Heart left ventricle (tissue), 16 donors: ENCODE measurements at regions of chr3 and their contacts with region 1.

Region 1: GRCh38 chr3:137647179-137647578 is 116.9 kb upstream of the SOX14 start:
- DNase-seq: no peak
- ATAC-seq: no peak
- H3K4me3 ChIP-seq: no peak overlapping the region
- H3K27ac ChIP-seq: no peak overlapping the region
- H3K4me1 ChIP-seq: no peaks in the 10 kb centered on the region
- H3K27me3 ChIP-seq: peaks cover 0 to 31% (median 0%) of the 10 kb centered on the region in 9 donors
- CTCF ChIP-seq: no peak
- POLR2A ChIP-seq: no peak

Region 2: GRCh38 chr3:137612291-137612690 is 34.9 kb before region 1 on chr3:
- intact Hi-C with region 1: loop called in 1 of 10 experiments (anchors 10 kb)
- DNase-seq: no peak
- ATAC-seq: no peak
- H3K4me3 ChIP-seq: no peak overlapping the region
- H3K27ac ChIP-seq: no peak overlapping the region
- H3K4me1 ChIP-seq: no peaks in the 10 kb centered on the region
- H3K27me3 ChIP-seq: no peaks in the 10 kb centered on the region
- CTCF ChIP-seq: no peak
- POLR2A ChIP-seq: no peak

Region 3: DNA sequence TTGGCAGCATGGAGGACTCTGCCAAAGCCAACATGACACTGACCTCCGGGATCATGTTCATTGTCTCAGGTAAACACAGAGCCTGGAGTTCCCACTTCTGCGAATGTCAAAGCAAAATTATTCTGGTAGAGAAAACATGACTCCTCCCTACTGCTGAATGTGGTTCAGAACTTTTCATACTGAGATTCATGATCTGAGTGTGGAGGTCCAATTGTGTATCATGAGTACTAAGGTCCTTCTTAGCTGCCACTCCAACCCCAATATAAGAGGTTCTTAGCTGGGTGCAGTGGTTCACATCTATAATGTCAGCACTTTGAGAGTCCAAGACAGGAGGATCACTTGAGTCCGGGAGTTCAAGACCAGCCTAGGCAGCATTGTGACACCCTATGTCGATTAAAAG is 376.6 kb after region 1 on chr3:
- intact Hi-C with region 1: no loop called
- DNase-seq: no peak
- ATAC-seq: no peak
- H3K4me3 ChIP-seq: no peak overlapping the region
- H3K27ac ChIP-seq: no peak overlapping the region
- H3K4me1 ChIP-seq: no peaks in the 10 kb centered on the region
- H3K27me3 ChIP-seq: no peaks in the 10 kb centered on the region
- CTCF ChIP-seq: no peak
- POLR2A ChIP-seq: no peak